CD8-positive, alpha-beta memory T cell (primary cell): ENCODE measurements at regions of chr1 and their contacts with region 1.

Region 1: DNA sequence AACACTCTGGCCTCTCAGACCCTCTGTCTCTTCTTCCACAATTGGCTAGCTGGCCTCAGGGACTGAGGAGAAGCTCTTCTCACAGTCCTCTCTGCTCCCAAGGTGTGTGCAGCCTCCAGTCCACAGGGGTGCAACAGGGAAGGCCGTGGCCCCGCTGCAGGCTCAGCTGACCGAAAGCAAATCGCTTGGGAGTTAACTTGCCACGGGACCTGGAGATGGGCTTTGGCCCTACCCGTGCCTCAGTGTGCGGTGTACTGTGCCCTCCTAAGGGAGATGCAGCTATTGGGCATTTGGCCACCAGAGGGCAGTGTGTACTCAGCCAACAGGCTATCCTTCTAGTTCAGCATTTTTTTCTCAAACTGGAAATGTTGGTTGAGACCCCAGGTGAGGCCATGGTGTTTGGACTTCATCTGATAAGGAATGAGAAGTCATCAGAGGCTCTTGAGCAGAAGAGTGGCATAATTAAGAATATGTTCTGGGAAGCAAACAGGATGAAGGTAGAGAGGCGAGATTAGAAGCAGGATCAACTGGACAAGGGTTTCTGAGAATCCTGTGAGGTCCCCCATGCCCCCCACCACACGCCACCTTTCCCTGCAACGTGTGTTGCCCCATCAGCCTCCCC is 42.5 kb upstream of the TMEM125 start:
- DNase-seq: peak; percentile 59 to 87 (median 73)
- H3K4me3 ChIP-seq: no peak overlapping the region
- H3K4me3 Mint-ChIP-seq: no peak overlapping the region
- H3K27ac ChIP-seq: no peak overlapping the region
- H3K27ac Mint-ChIP-seq: peak overlapping the region in 1 of 8 donors; percentile 66
- H3K4me1 ChIP-seq: no peaks in the 10 kb centered on the region
- H3K4me1 Mint-ChIP-seq: peaks cover 0 to 2% (median 0%) of the 10 kb centered on the region in 3 donors
- H3K27me3 ChIP-seq: no peaks in the 10 kb centered on the region
- H3K27me3 Mint-ChIP-seq: peaks cover 3 to 7% of the 10 kb centered on the region in 2 donors

Region 2: DNA sequence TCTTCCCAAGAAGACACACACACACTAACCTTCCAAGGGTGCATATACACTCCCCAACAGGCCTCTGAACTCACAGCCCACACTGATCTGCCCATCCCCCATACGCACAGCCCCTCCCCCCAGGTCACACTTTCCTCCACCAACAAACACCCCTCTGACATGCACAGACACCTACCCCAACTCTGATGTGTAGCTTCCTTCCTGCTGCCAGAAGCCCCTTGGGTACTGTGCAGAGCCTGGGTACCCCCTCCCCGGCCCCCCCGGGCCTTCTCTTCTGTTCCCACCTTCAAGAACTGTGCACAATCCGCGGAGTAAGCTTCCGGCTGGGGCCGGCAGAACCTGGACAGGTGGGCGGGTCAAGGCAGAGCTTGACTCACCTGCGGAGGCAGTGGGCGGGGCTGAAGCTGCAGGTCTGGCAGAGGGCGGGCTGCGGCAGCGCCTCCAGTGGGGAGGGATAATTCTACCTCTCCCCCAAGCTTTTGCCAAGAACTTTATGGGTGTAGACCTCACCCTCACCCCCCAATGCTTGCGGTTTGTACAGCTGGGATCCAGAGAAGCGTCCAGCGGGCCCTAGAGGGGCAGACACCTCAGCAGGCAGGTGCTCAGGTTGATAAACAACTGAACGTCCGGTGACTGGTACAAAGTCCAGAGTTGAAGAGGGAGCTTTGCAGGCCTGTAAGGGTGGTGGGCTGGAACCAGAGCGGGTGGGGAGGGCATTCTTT is 58.2 kb after region 1 on chr1 and contains the start of gene C1orf210:
- CTCF ChIA-PET with region 1: no interaction called
- POLR2A ChIA-PET with region 1: no interaction called
- DNase-seq: peak in 1 of 5 donors; percentile 41
- H3K4me3 ChIP-seq: no peak within 1 kb of the TSS
- H3K4me3 Mint-ChIP-seq: no peak within 1 kb of the TSS
- H3K27ac ChIP-seq: no peak within 1 kb of the TSS
- H3K27ac Mint-ChIP-seq: peak within 1 kb of the TSS in 1 of 8 donors; percentile 87
- H3K4me1 ChIP-seq: no peaks in the 10 kb centered on the region
- H3K4me1 Mint-ChIP-seq: no peaks in the 10 kb centered on the region
- H3K27me3 ChIP-seq: no peaks in the 10 kb centered on the region
- H3K27me3 Mint-ChIP-seq: peaks cover 5 to 27% of the 10 kb centered on the region in 2 donors
- total RNA-seq, gene C1orf210: not detected

Region 3: DNA sequence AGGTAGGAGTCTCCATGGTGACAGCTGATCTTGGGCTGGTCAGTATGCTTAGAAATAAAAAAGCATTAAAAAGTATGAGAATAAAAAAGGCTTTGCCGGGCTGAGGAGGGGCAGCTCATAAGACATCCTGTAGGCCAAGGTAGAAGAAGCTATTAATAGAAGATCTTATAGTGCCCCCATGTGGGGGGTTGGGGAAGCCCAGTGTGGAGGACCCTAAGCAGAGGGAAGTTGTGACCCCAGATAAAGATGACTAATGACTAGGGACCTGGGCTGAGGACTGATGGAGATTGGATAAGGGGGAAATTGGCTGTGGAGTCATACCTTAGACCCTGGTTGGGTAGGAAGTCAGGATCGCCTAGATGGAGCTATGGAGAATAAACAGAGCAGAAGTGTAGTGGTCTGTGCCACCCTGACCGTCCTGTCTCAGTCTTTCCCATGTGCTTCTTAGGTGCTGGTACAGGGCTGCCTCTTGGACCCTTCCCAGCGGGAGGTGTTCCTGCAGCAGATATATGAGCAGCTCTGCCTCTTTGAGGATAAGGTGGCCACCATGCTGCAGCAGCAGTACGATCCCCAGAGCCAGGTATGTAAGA is 187.5 kb after region 1 on chr1:
- CTCF ChIA-PET with region 1: interaction called, 97 read pairs
- POLR2A ChIA-PET with region 1: no interaction called
- DNase-seq: peak; percentile 52 to 71 (median 54)
- H3K4me3 ChIP-seq: no peak overlapping the region
- H3K4me3 Mint-ChIP-seq: no peak overlapping the region
- H3K27ac ChIP-seq: no peak overlapping the region
- H3K27ac Mint-ChIP-seq: peak overlapping the region in 6 of 8 donors; percentile 13 to 94 (median 80)
- H3K4me1 ChIP-seq: no peaks in the 10 kb centered on the region
- H3K4me1 Mint-ChIP-seq: peaks cover 2 to 5% (median 3%) of the 10 kb centered on the region in 3 donors
- H3K27me3 ChIP-seq: no peaks in the 10 kb centered on the region
- H3K27me3 Mint-ChIP-seq: no peaks in the 10 kb centered on the region